ENCODE measurements at regions of chr20 and their contacts with region 1.

Region 1: DNA sequence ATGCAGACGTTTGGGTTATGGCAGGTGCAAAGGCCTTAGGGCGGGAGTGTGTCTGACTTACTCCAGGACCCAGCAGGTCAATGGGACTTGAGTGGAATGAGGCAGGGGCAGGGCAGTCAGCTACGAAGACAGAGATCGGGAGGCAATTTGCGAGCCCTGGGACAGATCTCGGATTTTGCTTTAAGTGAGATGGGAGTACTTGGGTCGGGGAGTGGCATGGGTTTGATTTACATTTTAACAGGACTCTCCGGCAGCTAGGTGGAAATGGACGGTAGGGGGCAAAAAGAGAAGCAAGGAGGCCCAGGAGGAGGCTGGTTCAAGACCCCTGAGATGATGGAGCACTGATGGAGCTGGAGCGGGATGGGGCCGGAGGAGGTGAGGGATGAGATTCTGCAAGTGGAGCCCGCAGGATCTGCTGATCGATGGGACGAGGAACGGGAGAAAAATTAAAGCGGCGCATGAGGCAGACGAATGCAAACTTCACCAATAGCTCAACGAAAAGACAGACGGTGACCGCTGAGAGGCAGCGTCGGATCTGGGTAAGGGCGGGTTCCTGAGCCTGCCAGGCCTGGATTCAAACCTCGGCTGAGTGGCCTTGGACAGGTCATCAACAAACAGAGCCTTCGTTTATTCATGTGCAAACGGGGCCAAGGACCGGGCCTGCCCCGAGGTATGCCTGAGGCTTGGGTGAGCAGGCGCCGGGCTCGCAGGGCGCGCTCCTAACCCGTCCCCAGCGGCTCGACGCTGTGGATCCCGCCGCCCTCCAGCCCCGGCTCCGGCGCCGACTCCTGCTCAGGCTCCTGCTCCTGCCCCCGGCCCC is 756 bp upstream of the RBCK1 start:
- DNase-seq: peak; percentile 93

Region 2: GRCh38 chr20:381581-382290 is 25.6 kb before region 1 on chr20:
- CTCF ChIA-PET with region 1: no interaction called
- POLR2A ChIA-PET with region 1: interaction called, 14 read pairs
- DNase-seq: peak; percentile 50